ENCODE measurements at regions of chr16 and their contacts with region 1.

Region 1: DNA sequence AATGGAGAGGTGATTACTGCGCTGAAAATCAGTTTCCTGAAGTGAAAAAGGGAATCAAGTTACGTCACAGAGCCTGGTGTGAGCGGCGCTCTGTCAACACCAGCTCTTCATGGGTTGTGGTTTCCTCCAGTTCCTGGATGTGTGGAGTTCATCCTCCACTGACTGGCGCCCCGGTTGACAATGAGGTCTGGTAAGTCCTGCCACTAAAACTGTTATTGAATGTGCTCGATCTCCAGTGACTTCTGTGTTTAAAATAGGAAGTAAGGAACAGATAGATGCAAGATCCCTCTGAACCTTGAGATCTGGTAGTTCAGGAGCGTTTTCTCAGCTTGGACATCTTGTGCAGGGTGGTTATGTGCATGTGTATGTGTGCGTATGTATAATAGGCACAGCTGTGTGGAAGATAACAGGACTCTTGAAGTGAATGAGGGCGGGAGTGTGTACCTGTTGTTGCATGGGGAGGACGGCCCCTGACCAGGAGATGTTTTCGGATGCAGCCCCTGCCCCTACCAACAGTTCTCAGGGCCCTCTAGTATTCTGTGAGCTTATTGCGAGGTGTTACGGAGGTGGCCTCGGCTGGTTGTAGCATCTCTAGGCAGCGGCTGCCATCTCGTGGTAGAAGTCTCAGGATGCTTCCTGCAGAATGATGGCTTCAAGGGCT is 22.0 kb upstream of the GOT2 start:
- DNase-seq: peak; percentile 61 to 72
- H3K4me3 ChIP-seq: peak overlapping the region in 1 of 4 experiments; percentile 28; a peak in 1 of 8 replicates
- H3K27ac ChIP-seq: no peak overlapping the region
- H3K4me1 ChIP-seq: peaks cover 0 to 5% (median 2%) of the 10 kb centered on the region in 4 experiments; a peak in 3 of 7 replicates
- H3K27me3 ChIP-seq: no peaks in the 10 kb centered on the region
- CTCF ChIP-seq: peak; percentile 75 to 88 (median 87)
- EP300 ChIP-seq: no peak
- POLR2A ChIP-seq: no peak
- RAD21 ChIP-seq: peak; percentile 97

Region 2: GRCh38 chr16:58661199-58661830 is 94.8 kb before region 1 on chr16:
- CTCF ChIA-PET with region 1: interaction called, 10 read pairs
- POLR2A ChIA-PET with region 1: no interaction called
- DNase-seq: peak in 1 of 2 experiments; percentile 19
- H3K4me3 ChIP-seq: no peak overlapping the region
- H3K27ac ChIP-seq: no peak overlapping the region
- H3K4me1 ChIP-seq: no peaks in the 10 kb centered on the region
- H3K27me3 ChIP-seq: no peaks in the 10 kb centered on the region
- CTCF ChIP-seq: peak in 2 of 3 experiments; percentile 70 to 76; a peak in 3 of 4 replicates
- EP300 ChIP-seq: no peak
- POLR2A ChIP-seq: no peak
- RAD21 ChIP-seq: peak; percentile 93 to 94

Region 3: DNA sequence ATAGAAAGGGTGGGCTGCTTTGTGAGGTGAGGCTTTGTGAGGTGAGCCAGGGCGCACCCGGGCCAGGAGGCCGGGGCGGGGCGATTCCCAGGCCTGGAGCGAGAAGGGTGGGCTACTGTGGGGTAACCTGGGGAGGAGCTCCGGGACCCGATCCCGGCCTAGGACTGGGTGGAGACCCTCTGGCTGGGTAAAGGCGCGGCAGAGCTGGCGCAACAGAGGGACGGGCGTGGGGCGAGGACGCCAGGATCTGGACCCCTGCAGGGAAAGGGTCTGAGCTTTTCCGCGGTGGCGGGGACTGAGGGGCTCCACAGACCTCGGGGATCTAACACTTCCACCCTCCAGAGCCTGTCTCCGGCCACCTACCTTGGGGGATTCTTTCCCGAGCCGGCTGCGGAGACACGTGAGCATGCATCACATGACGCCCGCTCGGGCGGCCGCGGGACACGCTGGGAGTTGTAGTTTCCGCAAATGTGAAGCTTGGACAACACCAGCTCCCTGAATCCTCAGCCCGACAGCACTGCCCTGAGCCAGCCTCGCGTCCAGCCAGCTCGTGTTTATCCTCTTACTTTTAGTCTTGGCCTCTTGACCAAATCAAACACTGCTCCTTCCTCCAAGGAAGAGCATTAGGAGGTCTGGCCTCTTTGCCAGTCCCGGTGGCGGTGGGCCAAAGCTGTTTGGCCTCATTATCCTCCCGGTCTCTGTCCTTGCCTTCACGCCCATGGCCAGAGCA is 71.6 kb before region 1 on chr16 and contains the start of gene SLC38A7:
- CTCF ChIA-PET with region 1: interaction called, 11 read pairs
- POLR2A ChIA-PET with region 1: interaction called, 3 read pairs
- DNase-seq: peak; percentile 61 to 89
- H3K4me3 ChIP-seq: peak within 1 kb of the TSS; percentile 82 to 94 (median 84)
- H3K27ac ChIP-seq: peak within 1 kb of the TSS; percentile 59; the same call in 1 of the 2 replicates
- H3K4me1 ChIP-seq: peaks cover 0 to 8% (median 3%) of the 10 kb centered on the region in 4 experiments; a peak in 5 of 7 replicates
- H3K27me3 ChIP-seq: no peaks in the 10 kb centered on the region
- CTCF ChIP-seq: no peak
- EP300 ChIP-seq: 0 out of 3 replicates have a peak, but pooled peaks of 1 of the 2 experiments have one; percentile 34
- POLR2A ChIP-seq: peak; percentile 39 to 93
- RAD21 ChIP-seq: no peak
- total RNA-seq, gene SLC38A7: 26.7 and 29.6 TPM in 2 replicates

Region 4: DNA sequence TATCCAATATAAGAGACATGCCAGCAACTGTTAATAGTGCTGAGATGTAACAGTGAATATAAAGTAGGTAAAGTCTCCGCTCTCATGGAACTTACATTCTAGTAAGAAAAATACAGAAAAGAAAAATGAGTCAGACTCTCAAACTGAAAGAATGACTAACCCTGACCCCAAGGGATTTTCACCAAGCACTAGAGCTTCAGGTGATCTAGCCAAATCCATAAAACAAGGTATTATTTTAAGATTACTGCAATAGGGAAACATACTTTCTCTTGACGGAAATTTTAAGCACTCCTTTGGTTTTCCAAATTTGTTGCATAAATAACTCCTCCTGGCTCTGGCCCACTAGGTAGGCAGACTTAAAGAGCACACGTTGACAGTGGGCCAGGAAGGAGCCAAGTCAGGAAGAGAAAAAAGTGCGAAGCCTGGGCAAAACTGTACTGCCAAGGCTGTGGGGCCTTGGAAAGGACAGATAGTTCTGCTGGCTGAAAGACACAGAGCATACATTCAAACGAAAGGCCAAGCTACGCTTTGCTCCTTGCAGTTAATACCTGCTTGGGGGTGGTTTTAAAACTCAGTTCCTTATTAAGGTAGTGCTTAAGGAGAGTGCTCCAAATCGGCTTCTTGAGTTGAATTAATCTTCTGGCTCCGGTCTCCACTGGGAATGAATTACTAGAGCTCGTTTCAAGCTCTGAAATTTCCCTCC is 23.4 kb before region 1 on chr16:
- CTCF ChIA-PET with region 1: interaction called, 10 read pairs
- POLR2A ChIA-PET with region 1: interaction called, 4 read pairs
- DNase-seq: no peak
- H3K4me3 ChIP-seq: peak overlapping the region; percentile 64 to 90 (median 89)
- H3K27ac ChIP-seq: no peak overlapping the region
- H3K4me1 ChIP-seq: peaks cover 0 to 8% (median 2%) of the 10 kb centered on the region in 4 experiments; a peak in 3 of 7 replicates
- H3K27me3 ChIP-seq: no peaks in the 10 kb centered on the region
- CTCF ChIP-seq: no peak
- EP300 ChIP-seq: no peak
- POLR2A ChIP-seq: no peak
- RAD21 ChIP-seq: no peak

Region 5: GRCh38 chr16:58744497-58744896 is 11.6 kb before region 1 on chr16:
- CTCF ChIA-PET with region 1: interaction called, 18 read pairs
- POLR2A ChIA-PET with region 1: interaction called, 4 read pairs
- DNase-seq: no peak
- H3K4me3 ChIP-seq: no peak overlapping the region
- H3K27ac ChIP-seq: no peak overlapping the region
- H3K4me1 ChIP-seq: no peaks in the 10 kb centered on the region
- H3K27me3 ChIP-seq: no peaks in the 10 kb centered on the region
- CTCF ChIP-seq: no peak
- EP300 ChIP-seq: no peak
- POLR2A ChIP-seq: no peak
- RAD21 ChIP-seq: no peak

Region 6: GRCh38 chr16:58767581-58767980 is 11.5 kb after region 1 on chr16:
- CTCF ChIA-PET with region 1: interaction called, 10 read pairs
- POLR2A ChIA-PET with region 1: no interaction called
- DNase-seq: no peak
- H3K4me3 ChIP-seq: no peak overlapping the region
- H3K27ac ChIP-seq: no peak overlapping the region
- H3K4me1 ChIP-seq: peaks cover 0 to 4% (median 0%) of the 10 kb centered on the region in 4 experiments; a peak in 1 of 7 replicates
- H3K27me3 ChIP-seq: no peaks in the 10 kb centered on the region
- CTCF ChIP-seq: no peak
- EP300 ChIP-seq: no peak
- POLR2A ChIP-seq: no peak
- RAD21 ChIP-seq: no peak

Region 7: GRCh38 chr16:58843675-58844074 is 87.6 kb after region 1 on chr16:
- CTCF ChIA-PET with region 1: no interaction called
- POLR2A ChIA-PET with region 1: no interaction called
- DNase-seq: no peak
- H3K4me3 ChIP-seq: no peak overlapping the region
- H3K27ac ChIP-seq: no peak overlapping the region
- H3K4me1 ChIP-seq: no peaks in the 10 kb centered on the region
- H3K27me3 ChIP-seq: no peaks in the 10 kb centered on the region
- CTCF ChIP-seq: peak in 1 of 3 experiments; percentile 13; a peak in 2 of 4 replicates
- EP300 ChIP-seq: no peak
- POLR2A ChIP-seq: no peak
- RAD21 ChIP-seq: peak; percentile 75 to 78

Region 8: GRCh38 chr16:58885528-58886170 is 129.5 kb after region 1 on chr16:
- CTCF ChIA-PET with region 1: no interaction called
- POLR2A ChIA-PET with region 1: no interaction called
- DNase-seq: no peak
- H3K4me3 ChIP-seq: no peak overlapping the region
- H3K27ac ChIP-seq: no peak overlapping the region
- H3K4me1 ChIP-seq: no peaks in the 10 kb centered on the region
- H3K27me3 ChIP-seq: no peaks in the 10 kb centered on the region
- CTCF ChIP-seq: no peak
- EP300 ChIP-seq: no peak
- POLR2A ChIP-seq: no peak
- RAD21 ChIP-seq: no peak

Measured in H1 (cell line).